Cardiac septum (tissue), 1 donor: ENCODE measurements at regions of chr6 and their contacts with region 1.

Region 1: DNA sequence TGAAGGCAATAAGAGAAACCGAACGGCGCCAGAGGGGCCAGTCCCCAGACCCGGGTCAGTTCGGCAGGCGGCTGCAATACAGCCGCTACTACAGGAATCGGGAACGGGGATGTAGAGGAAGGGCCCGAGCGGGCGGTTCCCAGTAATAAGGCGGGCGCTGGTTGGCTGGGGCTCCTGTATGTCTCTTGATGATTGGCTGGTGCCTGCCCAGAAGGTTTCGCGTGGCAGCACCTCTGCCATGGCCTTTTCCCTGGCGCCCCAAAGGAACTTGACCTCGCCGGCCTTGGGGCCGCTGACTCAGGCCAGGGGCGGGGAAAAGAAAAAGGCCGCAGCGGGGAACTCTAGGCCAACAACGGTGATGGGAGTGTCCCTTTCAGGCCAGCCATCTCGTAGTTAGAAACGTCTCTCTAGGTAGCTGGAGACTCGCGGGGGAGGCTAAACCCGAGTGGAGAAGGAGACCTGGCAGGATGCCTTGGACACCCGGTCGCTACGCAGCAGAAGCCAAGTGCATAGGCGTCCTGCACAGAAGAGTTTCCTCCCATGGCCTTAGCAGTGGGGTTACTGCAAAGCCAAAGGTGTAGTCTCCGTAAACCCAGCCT is at the start of gene IBTK:
- DNase-seq: peak; percentile 97
- total RNA-seq, gene IBTK: 36.5 TPM

Region 2: GRCh38 chr6:81906709-81907204 is 341.0 kb before region 1 on chr6:
- intact Hi-C with region 1: no loop called
- DNase-seq: no peak

Region 3: GRCh38 chr6:82111114-82111513 is 136.6 kb before region 1 on chr6:
- intact Hi-C with region 1: no loop called
- DNase-seq: no peak

Region 4: DNA sequence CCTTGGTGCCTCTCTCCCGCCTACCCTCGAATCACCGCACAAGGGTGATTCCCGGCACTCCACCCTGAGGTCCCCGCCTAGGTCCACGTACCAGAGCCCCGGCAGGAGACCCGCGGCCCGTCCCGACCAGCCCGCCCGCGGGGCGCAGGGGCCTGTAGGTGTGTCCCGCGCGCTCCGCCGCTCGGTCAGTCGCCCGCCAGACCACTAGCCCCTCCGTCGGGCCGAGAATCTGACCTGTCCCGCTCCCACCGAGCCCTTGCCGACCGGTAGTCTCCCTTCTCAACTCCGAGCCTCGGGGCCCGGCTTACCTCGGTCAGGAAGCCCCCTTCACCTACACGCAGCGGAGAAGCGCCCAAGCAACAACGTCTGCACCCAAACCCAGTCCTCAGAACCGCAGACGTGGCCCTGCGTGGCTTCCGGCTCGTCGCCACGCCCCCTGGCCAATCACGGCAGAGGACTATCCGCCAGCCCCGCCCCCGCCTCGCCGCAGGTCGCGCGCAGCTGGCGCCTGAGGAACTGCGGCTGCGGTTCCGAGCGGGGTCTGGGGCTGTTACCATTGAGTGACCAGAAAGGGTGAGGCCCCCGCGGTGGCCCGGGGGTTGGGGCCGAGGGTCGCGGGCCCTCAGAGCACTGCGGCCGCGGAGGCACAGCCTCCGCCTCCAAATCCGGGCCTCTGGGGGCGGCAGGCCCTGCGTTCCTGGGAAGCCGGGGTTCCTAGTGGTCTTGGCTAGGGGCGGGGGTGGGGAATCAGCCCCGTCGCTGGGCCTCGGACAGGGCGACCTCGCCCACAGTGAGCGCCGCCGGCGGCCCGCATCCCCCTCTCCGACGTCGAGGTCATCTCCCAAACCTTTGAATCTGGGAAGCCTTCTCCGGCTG is 945.4 kb after region 1 on chr6 and contains the starts of genes PGM3 and RWDD2A:
- intact Hi-C with region 1: loop called (anchors 10 kb)
- DNase-seq: peak; percentile 95
- total RNA-seq, gene PGM3: 23.8 TPM
- total RNA-seq, gene RWDD2A: 3.2 TPM